ENCODE measurements at regions of chr1 and their contacts with region 1.

Region 1: DNA sequence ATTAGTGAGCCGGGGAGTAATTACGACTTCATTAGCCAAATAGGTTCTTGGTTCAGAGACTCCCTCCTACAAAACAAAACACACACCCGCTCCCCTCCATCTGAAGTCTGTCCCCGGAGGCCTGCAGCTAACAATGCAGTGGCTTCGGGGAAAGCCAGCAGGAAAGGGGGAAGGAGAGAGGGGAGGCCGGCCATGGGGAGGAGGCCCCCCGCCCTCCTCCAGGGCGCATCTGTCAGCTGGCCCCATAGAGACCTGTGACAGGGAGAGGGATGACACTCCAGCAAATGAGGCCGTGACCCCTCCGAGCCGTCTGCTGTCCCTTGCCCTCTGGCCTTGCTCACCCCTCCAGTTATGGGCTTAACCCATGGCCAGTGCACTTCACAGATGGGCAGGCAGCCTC is 12.1 kb upstream of the CNTN2 start:
- DNase-seq: no peak
- H3K4me3 ChIP-seq: no peak overlapping the region
- H3K27ac ChIP-seq: no peak overlapping the region
- H3K27me3 ChIP-seq: no peaks in the 10 kb centered on the region
- CTCF ChIP-seq: no peak

Region 2: DNA sequence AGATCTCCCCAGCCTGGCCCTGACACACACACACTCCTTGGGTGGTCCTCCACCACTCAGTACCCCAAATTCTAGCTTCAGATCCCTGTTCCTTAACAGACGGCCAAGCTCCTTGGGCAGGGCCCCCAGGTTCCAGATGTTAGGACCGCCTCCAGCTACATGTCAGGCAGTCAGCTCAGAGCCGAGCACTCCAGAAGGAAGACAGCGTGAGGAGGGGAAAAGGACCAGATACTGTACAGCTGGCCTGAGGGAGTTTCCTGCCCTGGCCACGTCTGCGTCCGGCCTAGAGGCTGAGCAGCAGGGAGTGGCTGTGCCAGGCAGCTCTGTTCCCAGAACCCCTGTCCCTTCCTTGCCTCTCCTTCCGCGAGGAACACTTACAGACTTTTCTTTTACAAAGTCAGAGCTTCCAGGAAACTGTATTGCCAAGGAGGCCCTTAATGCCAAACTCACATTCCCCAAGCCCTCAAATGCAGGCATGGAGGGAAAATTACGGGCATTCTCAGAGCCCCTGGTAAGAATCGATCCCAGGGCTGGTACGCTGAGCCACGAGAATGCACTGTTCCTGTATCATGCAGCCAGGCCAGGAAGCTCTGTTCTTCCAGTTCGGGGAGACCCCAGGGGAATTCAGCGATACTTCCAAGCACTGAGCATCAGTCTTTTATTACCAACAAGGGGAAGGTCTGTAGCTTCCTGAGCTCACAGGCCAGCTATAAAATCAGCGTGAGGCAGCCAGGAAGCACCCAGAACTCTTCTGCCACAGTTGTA is 33.1 kb before region 1 on chr1:
- intact Hi-C with region 1: loop called in 1 of 2 experiments (anchors 5 kb)
- DNase-seq: no peak
- H3K4me3 ChIP-seq: no peak overlapping the region
- H3K27ac ChIP-seq: peak overlapping the region; percentile 12 to 100 (median 71)
- H3K27me3 ChIP-seq: no peaks in the 10 kb centered on the region
- CTCF ChIP-seq: no peak

Measured in dorsolateral prefrontal cortex (tissue), 120 donors.